ENCODE measurements at regions of chr6 and their contacts with region 1.

Region 1: DNA sequence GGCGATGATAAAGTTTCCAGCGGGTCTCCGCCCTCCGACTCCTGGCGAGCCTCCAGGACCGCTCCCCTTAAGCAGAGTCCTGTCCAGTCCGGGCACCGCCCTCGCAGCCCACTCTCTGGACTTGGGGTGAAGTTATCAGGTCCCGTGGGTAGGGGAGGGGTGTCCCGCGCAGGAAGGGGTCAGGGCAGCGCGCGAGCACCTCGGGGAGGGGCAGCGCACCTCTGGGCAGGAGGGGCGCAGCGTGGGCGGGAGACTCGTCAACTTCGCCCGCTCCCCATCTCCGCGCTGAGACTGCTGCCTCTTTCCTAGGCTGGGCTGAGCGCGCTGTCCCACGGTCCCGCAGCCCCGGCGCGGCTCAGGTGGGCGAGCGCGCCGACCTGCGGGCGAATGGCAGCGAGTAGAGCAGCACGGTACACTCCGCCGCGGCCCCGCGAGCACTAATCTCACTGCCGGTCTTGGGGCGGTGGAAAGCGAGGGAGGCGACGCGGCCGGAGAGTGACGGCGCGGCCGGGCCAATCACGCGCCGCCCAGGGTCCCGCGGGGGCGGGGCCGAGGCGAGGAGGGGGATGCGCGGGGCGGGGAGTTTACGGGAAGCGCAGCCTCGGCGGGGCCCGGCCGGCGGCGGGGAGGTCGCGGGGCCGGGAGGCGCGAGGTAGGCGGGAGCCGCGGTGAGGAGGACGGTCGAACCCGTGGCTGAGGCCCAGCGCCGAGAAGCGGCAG is at the start of gene MAN1A1:
- DNase-seq: peak; percentile 60
- H3K4me3 ChIP-seq: peak within 1 kb of the TSS; percentile 57 to 89 (median 79)
- H3K27ac ChIP-seq: peak within 1 kb of the TSS; percentile 11
- H3K4me1 ChIP-seq: peaks cover 13% of the 10 kb centered on the region
- H3K27me3 ChIP-seq: peaks cover 12% of the 10 kb centered on the region
- CTCF ChIP-seq: no peak
- total RNA-seq, gene MAN1A1: 4.0 to 5.3 TPM

Region 2: DNA sequence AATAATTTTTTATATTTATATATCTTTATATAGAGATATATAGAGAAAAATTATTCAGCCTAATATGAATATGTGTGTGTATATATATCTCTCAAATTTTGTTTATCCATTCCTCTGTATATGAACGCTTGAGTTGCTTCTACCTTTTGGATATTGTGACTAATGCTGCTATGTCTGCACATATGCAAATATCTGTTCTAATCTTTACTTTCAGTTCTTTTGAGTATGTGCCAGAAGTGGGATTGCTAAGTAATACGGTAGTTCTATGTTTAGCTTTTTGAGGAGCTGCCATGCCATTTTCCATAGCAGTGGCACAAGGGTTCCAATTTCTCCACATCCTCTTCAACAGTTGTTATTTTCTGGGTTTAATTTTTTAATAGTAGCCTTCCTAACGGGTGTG is 625.3 kb before region 1 on chr6:
- CTCF ChIA-PET with region 1: no interaction called
- dilution Hi-C with region 1: no loop called
- in situ Hi-C with region 1: no loop called
- intact Hi-C with region 1: no loop called
- DNase-seq: no peak
- H3K4me3 ChIP-seq: no peak overlapping the region
- H3K27ac ChIP-seq: no peak overlapping the region
- H3K4me1 ChIP-seq: peaks cover 10% of the 10 kb centered on the region
- H3K27me3 ChIP-seq: no peaks in the 10 kb centered on the region
- CTCF ChIP-seq: no peak

Region 3: GRCh38 chr6:119147101-119148053 is 202.1 kb before region 1 on chr6:
- CTCF ChIA-PET with region 1: interaction called, 8 read pairs
- dilution Hi-C with region 1: no loop called
- in situ Hi-C with region 1: loop called (anchors 5 to 10 kb)
- intact Hi-C with region 1: loop called (anchors 1 kb)
- DNase-seq: peak; percentile 93
- H3K4me3 ChIP-seq: no peak overlapping the region
- H3K27ac ChIP-seq: peak overlapping the region; percentile 54
- H3K4me1 ChIP-seq: peaks cover 24% of the 10 kb centered on the region
- H3K27me3 ChIP-seq: no peaks in the 10 kb centered on the region
- CTCF ChIP-seq: no peak

Region 4: DNA sequence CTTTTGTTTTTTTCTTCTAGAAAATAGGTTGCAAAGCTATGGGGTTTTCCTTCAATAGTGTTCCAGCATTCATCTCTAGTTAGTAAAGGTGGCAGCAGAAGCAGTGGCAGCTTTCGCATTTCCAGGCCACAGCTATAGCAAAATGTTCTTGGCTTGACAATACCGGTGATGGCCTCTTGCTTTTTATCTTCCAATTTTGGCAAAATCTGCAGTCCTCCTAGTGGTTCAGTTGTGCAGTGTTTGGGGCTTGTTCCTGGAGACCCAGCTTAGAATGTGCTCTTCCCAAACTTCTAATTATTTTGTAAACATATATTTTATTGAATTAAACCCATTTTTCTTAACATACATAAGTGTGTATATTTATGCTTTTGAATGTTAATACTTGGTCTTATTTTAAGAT is 370.7 kb after region 1 on chr6:
- CTCF ChIA-PET with region 1: no interaction called
- dilution Hi-C with region 1: no loop called
- in situ Hi-C with region 1: loop called in 1 of 2 experiments (anchors 25 kb)
- intact Hi-C with region 1: loop called (anchors 10 kb)
- DNase-seq: no peak
- H3K4me3 ChIP-seq: no peak overlapping the region
- H3K27ac ChIP-seq: no peak overlapping the region
- H3K4me1 ChIP-seq: no peaks in the 10 kb centered on the region
- H3K27me3 ChIP-seq: no peaks in the 10 kb centered on the region
- CTCF ChIP-seq: peak in 1 of 2 donors; percentile 25

Region 5: DNA sequence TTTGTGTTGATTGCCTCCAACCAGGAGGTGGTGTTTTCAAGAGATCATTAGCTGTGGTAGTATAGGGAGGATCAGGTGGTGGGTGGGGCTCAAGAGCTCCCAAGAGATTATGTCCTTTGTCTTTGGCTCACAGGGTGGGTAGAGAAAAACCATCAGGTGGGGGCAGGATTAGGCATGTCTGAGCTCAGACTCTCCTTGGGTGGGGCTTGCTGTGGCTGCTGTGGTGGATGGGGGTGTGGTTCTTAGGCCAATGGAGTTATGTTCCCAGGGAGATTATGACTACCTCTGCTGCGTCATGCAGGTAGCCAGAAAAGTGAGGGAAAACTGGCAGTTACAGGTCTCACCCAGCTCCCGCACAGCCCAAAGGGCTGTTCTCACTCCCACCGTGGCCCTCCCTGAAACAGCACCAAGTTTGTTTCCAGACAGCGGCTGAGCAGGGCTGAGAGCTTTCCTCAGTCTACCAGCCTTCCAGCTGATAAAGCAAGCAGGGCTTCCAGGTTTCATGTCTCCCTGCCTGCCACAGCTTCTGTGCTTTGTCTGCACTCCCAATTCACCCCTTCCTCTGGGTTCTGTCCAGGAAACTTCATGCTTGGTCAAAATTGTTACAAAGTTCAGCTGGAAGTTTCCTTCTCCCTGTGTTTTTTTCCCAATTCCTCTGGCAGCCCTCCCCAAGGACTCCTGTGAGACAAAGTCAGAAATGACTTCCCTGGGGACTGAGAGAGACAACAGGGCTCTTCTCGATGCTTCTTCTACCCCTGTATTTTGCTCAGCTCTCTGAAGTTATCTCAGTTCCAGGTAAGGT is 481.2 kb after region 1 on chr6:
- CTCF ChIA-PET with region 1: no interaction called
- dilution Hi-C with region 1: no loop called
- in situ Hi-C with region 1: no loop called
- intact Hi-C with region 1: loop called (anchors 5 kb)
- DNase-seq: peak; percentile 97
- H3K4me3 ChIP-seq: no peak overlapping the region
- H3K27ac ChIP-seq: peak overlapping the region; percentile 91
- H3K4me1 ChIP-seq: peaks cover 40% of the 10 kb centered on the region
- H3K27me3 ChIP-seq: no peaks in the 10 kb centered on the region
- CTCF ChIP-seq: no peak

Region 6: DNA sequence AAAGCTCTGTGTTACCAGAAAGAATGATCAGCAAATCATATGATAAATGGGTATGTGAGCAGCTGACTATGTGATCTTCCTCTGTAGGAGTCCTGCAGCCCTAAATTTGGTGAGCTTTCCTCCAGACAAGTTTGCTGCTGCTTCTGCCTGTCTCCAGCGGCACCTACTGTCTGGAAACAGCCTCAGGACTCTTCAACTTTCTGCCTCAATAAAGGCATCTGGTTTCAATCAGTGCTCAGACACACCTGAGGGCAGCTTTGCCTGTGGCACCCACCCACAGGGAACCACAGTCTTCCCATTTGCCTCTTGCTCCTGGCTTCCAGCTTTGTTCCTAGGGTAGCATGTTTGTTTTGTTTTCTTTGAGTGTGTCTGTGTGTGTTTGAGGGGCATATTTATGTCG is 728.0 kb after region 1 on chr6:
- CTCF ChIA-PET with region 1: no interaction called
- dilution Hi-C with region 1: no loop called
- in situ Hi-C with region 1: no loop called
- intact Hi-C with region 1: loop called (anchors 5 kb)
- DNase-seq: peak; percentile 8
- H3K4me3 ChIP-seq: no peak overlapping the region
- H3K27ac ChIP-seq: no peak overlapping the region
- H3K4me1 ChIP-seq: no peaks in the 10 kb centered on the region
- H3K27me3 ChIP-seq: no peaks in the 10 kb centered on the region
- CTCF ChIP-seq: peak; percentile 34 to 69

Measured in mammary epithelial cell (primary cell).